ENCODE measurements at regions of chr12 and their contacts with region 1.

Region 1: DNA sequence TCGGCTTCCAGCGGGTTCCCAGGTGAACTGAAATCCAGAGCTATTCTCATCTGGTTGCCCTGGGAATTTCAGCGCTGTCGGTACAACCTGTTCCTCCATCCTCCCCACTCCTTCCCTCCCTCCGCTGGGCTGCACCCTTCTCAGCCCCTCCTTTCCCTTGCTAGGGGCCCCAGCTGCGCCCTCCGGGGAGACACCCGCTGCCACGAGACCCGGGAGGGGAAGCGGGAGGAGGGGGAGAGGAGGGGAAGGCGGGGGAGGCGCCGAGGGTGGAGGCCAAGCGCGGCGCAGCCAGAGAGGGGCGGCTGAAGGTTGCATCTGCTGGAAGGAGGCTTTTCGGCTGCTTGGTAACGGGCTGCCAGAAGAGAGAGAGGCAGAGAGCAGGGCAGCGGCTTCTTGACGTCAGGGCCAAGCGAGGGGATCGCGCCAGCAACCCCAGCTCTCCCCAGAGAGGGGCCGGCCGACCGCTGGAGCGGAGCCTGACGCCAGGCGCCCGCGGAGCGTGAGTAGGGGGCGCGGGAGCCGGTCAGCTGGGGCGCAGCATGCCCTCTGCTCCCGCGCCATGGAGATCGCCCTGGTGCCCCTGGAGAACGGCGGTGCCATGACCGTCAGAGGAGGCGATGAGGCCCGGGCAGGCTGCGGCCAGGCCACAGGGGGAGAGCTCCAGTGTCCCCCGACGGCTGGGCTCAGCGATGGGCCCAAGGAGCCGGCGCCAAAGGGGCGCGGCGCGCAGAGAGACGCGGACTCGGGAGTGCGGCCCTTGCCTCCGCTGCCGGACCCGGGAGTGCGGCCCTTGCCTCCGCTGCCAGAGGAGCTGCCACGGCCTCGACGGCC is at the start of gene KCNA5:
- DNase-seq: peak; percentile 80 to 88
- ATAC-seq: peak; percentile 76
- H3K4me3 ChIP-seq: peak within 1 kb of the TSS; percentile 39 to 87
- H3K27ac ChIP-seq: peak within 1 kb of the TSS; percentile 71 to 95
- H3K4me1 ChIP-seq: peaks cover 0 to 4% of the 10 kb centered on the region in 2 donors
- H3K27me3 ChIP-seq: no peaks in the 10 kb centered on the region
- total RNA-seq, gene KCNA5: 84.7 to 84.9 TPM

Region 2: DNA sequence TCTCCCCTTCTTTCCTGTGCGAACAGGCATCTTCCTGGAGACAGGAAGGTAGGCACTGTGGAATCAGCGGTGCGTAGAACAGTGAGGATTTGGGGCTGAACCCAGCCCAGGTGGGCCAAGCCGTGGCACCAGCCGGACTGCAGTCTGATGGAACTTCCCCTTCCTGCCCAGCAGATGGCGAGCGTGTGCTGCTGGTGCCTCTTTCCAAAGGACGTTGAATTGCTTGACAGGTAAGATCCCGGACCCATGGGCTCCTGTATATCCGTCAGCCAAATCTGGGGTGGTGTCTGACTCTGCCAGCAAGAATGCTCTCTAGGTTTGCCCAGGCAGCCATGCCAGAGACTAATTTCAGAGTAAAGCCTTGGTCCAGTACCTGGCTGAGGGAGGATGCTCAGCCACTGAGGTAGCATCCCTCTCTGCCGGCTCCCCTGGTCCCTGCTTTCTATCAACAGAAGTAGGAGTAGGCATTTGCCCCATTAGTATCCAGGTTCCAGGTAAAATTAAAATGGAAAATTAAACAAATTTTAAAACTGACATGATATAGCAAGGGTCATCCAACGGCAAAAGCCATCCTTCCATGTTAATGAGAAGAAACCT is 21.2 kb before region 1 on chr12:
- intact Hi-C with region 1: loop called in 1 of 2 experiments (anchors 2 kb)
- DNase-seq: peak in 1 of 2 donors; percentile 81
- ATAC-seq: peak; percentile 63
- H3K4me3 ChIP-seq: no peak overlapping the region
- H3K27ac ChIP-seq: no peak overlapping the region
- H3K4me1 ChIP-seq: peaks cover 0 to 2% of the 10 kb centered on the region in 2 donors
- H3K27me3 ChIP-seq: no peaks in the 10 kb centered on the region